ENCODE measurements at regions of chrX and their contacts with region 1.

Region 1: GRCh38 chrX:101390664-101391525 is at the start of gene RPL36A:
- DNase-seq: peak; percentile 85 to 86
- H3K4me3 ChIP-seq: peak within 1 kb of the TSS; percentile 91
- H3K27ac ChIP-seq: peak within 1 kb of the TSS; percentile 84
- H3K4me1 ChIP-seq: peaks cover 21% of the 10 kb centered on the region
- H3K27me3 ChIP-seq: no peaks in the 10 kb centered on the region
- CTCF ChIP-seq: peak; percentile 64
- total RNA-seq, gene RPL36A: 299 and 359 TPM in 2 replicates

Region 2: DNA sequence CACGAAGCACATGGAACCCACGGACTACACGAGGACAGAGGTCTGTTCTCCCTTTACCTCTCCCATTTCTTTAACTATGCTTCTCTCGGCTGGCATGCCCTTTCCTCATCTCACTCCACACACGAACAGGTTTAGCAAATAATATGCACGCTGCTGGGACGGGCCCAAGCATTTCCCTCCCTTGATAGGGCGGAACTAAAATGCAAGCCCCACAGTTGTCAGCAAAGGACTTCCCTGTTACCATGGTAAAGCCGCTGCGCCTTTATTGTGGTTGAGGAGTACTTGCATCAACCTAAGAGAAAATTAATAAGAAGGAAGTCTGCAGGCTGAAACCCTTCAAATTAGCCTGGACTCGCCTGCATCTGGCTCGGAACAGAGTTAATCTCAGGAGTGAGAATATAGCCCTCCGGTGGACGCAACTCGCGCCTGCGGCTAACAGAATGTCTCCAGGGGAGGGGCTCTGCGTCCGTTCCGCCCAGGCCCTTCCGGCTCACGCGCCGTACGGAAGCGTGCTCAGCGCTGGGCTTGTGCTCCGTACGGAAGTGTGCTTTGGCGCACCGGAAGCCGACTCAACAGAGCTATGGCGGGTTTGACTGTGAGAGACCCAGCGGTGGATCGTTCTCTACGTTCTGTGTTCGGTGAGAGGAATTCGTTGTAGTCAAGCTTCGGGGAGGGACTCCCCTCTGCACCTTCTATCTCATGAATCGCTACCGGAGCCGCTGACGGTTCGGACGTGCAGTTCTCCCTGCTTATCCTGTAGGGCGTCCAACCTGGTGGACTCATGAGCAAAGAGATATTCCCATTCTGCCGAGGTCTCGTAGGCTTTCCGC is 570.8 kb before region 1 on chrX and contains the start of gene CSTF2:
- CTCF ChIA-PET with region 1: interaction called, 3 read pairs
- POLR2A ChIA-PET with region 1: no interaction called
- intact Hi-C with region 1: loop called (anchors 2 kb)
- DNase-seq: peak; percentile 76 to 81
- H3K4me3 ChIP-seq: peak within 1 kb of the TSS; percentile 95
- H3K27ac ChIP-seq: peak within 1 kb of the TSS; percentile 60
- H3K4me1 ChIP-seq: peaks cover 5% of the 10 kb centered on the region; the same call in 1 of the 2 replicates
- H3K27me3 ChIP-seq: no peaks in the 10 kb centered on the region
- CTCF ChIP-seq: no peak
- total RNA-seq, gene CSTF2: 18.5 and 24.1 TPM in 2 replicates

Region 3: DNA sequence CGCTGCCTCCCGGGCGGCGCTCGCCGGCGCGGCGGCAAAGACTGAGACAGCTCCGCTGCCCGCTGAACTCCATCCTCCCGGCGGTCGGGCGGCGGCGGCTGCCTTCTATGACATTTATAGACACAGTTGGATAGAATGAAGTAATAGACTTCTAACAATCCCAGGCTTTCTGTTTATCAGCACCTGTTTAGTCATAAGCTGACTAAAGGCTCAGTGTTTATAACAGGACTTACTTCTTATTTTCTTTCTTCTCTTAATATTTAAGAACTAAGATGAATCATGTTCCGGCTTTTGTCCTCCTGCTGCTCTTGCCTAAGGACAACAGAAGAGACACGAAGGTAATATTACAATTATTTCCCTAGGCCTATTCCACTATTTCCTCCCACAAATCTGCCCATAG is 417.5 kb before region 1 on chrX:
- CTCF ChIA-PET with region 1: no interaction called
- POLR2A ChIA-PET with region 1: no interaction called
- intact Hi-C with region 1: no loop called
- DNase-seq: peak in 1 of 2 experiments; percentile 36
- H3K4me3 ChIP-seq: no peak overlapping the region
- H3K27ac ChIP-seq: no peak overlapping the region
- H3K4me1 ChIP-seq: peaks cover 20% of the 10 kb centered on the region
- H3K27me3 ChIP-seq: no peaks in the 10 kb centered on the region
- CTCF ChIP-seq: no peak

Region 4: GRCh38 chrX:101348452-101349192 is 42.3 kb before region 1 on chrX and contains the start of gene TIMM8A:
- CTCF ChIA-PET with region 1: no interaction called
- POLR2A ChIA-PET with region 1: no interaction called
- intact Hi-C with region 1: loop called (anchors 5 kb)
- DNase-seq: peak; percentile 62 to 74
- H3K4me3 ChIP-seq: peak within 1 kb of the TSS; percentile 93
- H3K27ac ChIP-seq: peak within 1 kb of the TSS; percentile 64
- H3K4me1 ChIP-seq: peaks cover 9% of the 10 kb centered on the region; the same call in 1 of the 2 replicates
- H3K27me3 ChIP-seq: no peaks in the 10 kb centered on the region
- CTCF ChIP-seq: no peak
- total RNA-seq, gene TIMM8A: 16.5 and 17.6 TPM in 2 replicates

Region 5: DNA sequence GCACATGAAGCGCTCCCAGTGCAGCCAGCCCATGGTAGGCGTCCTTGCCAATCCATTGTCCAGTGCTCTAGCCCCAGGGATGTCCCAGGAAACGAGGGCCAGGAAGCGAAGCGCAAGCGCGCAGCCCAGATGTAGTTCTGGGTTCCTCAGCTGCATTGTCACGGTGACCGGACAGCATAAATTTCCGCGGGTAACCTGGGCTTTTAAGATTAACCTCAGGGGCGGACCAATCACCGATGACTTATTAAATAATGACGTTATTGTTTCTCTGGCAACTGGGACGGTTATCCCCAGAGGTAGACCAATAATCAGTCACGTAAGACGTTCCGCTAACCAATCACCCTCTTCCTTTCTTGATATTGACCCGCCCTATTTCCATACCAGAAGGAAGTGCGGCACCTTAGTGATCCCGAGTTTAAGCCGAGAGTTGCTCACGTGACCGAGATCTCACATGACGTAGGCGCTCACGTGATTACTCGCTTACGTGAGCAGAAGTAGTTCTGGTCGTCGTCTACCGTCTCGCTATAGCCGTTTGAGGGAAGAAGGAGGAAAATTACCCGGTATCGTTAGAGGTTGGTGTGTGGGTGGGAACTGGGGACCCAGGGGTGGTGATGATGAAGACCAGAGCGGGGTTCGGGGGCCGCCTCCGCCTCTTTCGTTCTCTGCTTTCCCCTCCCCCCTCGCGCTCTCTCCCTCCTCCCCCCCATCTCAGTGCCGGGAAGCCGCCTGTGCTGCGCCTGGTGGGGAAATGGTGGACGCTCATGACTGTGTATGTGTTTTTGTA is 17.0 kb after region 1 on chrX and contains the starts of genes GLA and HNRNPH2:
- CTCF ChIA-PET with region 1: no interaction called
- POLR2A ChIA-PET with region 1: interaction called, 14 read pairs
- intact Hi-C with region 1: no loop called
- DNase-seq: peak; percentile 87 to 99
- H3K4me3 ChIP-seq: peak within 1 kb of the TSS; percentile 93
- H3K27ac ChIP-seq: peak within 1 kb of the TSS; percentile 91
- H3K4me1 ChIP-seq: peaks cover 20% of the 10 kb centered on the region
- H3K27me3 ChIP-seq: no peaks in the 10 kb centered on the region
- CTCF ChIP-seq: no peak
- total RNA-seq, gene GLA: 72.2 and 80.5 TPM in 2 replicates
- total RNA-seq, gene HNRNPH2: 61.0 and 72.9 TPM in 2 replicates

Measured in PC-9 (cell line).